Common myeloid progenitor, CD34-positive (primary cell): ENCODE measurements at regions of chrX and their contacts with region 1.

Region 1: GRCh38 chrX:136711147-136711546 is 63.2 kb downstream of the CD40LG start:
- DNase-seq: peak in 2 of 3 donors; percentile 28 to 39
- H3K4me3 ChIP-seq: no peak overlapping the region
- H3K27ac ChIP-seq: peak overlapping the region in 1 of 2 experiments; percentile 88
- H3K4me1 ChIP-seq: peaks cover 0 to 39% (median 16%) of the 10 kb centered on the region in 4 experiments
- H3K27me3 ChIP-seq: no peaks in the 10 kb centered on the region

Region 2: DNA sequence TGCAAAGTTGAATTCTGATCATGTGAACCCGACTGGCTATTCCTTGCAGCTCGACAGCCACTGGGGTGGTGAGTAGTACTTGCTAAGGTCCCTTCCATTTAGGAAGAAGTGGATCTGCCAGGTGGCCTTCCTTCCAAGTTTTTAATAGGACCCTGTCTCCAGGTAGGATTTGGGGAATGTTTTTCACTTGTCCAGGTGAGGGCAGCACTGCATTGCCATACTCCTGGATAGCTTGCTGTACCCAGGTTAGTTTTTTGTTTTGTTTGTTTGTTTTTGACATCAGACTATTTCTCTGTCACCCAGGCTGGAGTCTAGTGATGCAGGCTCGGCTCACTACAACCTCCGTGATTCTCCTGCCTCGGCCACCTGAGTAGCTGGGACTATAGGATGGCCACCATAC is 787.8 kb before region 1 on chrX:
- CTCF ChIA-PET with region 1: no interaction called
- POLR2A ChIA-PET with region 1: no interaction called
- DNase-seq: peak in 1 of 3 donors; percentile 5
- H3K4me3 ChIP-seq: no peak overlapping the region
- H3K27ac ChIP-seq: no peak overlapping the region
- H3K4me1 ChIP-seq: no peaks in the 10 kb centered on the region
- H3K27me3 ChIP-seq: no peaks in the 10 kb centered on the region

Region 3: GRCh38 chrX:136694431-136695087 is 16.6 kb before region 1 on chrX:
- CTCF ChIA-PET with region 1: interaction called, 11 read pairs
- POLR2A ChIA-PET with region 1: no interaction called
- DNase-seq: peak in 2 of 3 donors; percentile 66 to 69
- H3K4me3 ChIP-seq: no peak overlapping the region
- H3K27ac ChIP-seq: no peak overlapping the region
- H3K4me1 ChIP-seq: peaks cover 0 to 3% (median 0%) of the 10 kb centered on the region in 4 experiments
- H3K27me3 ChIP-seq: peaks cover 0 to 3% (median 0%) of the 10 kb centered on the region in 5 experiments

Region 4: GRCh38 chrX:136725446-136726104 is 14.4 kb after region 1 on chrX:
- CTCF ChIA-PET with region 1: interaction called, 20 read pairs
- POLR2A ChIA-PET with region 1: no interaction called
- DNase-seq: no peak
- H3K4me3 ChIP-seq: no peak overlapping the region
- H3K27ac ChIP-seq: peak overlapping the region in 1 of 2 experiments; percentile 14
- H3K4me1 ChIP-seq: peaks cover 0 to 3% (median 0%) of the 10 kb centered on the region in 4 experiments
- H3K27me3 ChIP-seq: no peaks in the 10 kb centered on the region

Region 5: GRCh38 chrX:136747003-136747986 is 36.1 kb after region 1 on chrX:
- CTCF ChIA-PET with region 1: interaction called, 12 read pairs
- POLR2A ChIA-PET with region 1: no interaction called
- DNase-seq: peak in 2 of 3 donors; percentile 61 to 66
- H3K4me3 ChIP-seq: peak overlapping the region in 1 of 7 experiments; percentile 17
- H3K27ac ChIP-seq: peak overlapping the region; percentile 12 to 69
- H3K4me1 ChIP-seq: peaks cover 45 to 87% (median 57%) of the 10 kb centered on the region in 4 experiments
- H3K27me3 ChIP-seq: no peaks in the 10 kb centered on the region